ENCODE measurements at regions of chr2 and their contacts with region 1.

Region 1: GRCh38 chr2:132400169-132400900 is 16.3 kb upstream of the GPR39 start:
- DNase-seq: no peak
- ATAC-seq: no peak
- H3K4me3 ChIP-seq: no peak overlapping the region
- H3K4me3 Mint-ChIP-seq: no peak overlapping the region
- H3K27ac ChIP-seq: no peak overlapping the region
- H3K27ac Mint-ChIP-seq: no peak overlapping the region
- H3K4me1 ChIP-seq: no peaks in the 10 kb centered on the region
- H3K4me1 Mint-ChIP-seq: no peaks in the 10 kb centered on the region
- H3K27me3 ChIP-seq: no peaks in the 10 kb centered on the region
- H3K27me3 Mint-ChIP-seq: no peaks in the 10 kb centered on the region
- CTCF ChIP-seq: no peak

Region 2: GRCh38 chr2:132991471-132992045 is 591.2 kb after region 1 on chr2:
- CTCF ChIA-PET with region 1: no interaction called
- POLR2A ChIA-PET with region 1: no interaction called
- intact Hi-C with region 1: loop called in 1 of 2 experiments (anchors 5 kb)
- DNase-seq: no peak
- ATAC-seq: no peak
- H3K4me3 ChIP-seq: no peak overlapping the region
- H3K4me3 Mint-ChIP-seq: no peak overlapping the region
- H3K27ac ChIP-seq: no peak overlapping the region
- H3K27ac Mint-ChIP-seq: no peak overlapping the region
- H3K4me1 ChIP-seq: no peaks in the 10 kb centered on the region
- H3K4me1 Mint-ChIP-seq: no peaks in the 10 kb centered on the region
- H3K27me3 ChIP-seq: no peaks in the 10 kb centered on the region
- H3K27me3 Mint-ChIP-seq: no peaks in the 10 kb centered on the region
- CTCF ChIP-seq: no peak

Measured in CD8-positive, alpha-beta T cell (primary cell).